CD8-positive, alpha-beta memory T cell (primary cell): ENCODE measurements at regions of chr5 and their contacts with region 1.

Region 1: GRCh38 chr5:134041570-134042411 is 37.0 kb upstream of the VDAC1 start:
- DNase-seq: peak in 1 of 5 donors; percentile 13
- H3K4me3 ChIP-seq: no peak overlapping the region
- H3K4me3 Mint-ChIP-seq: peak overlapping the region in 4 of 7 donors; percentile 41 to 64 (median 49)
- H3K27ac ChIP-seq: no peak overlapping the region
- H3K27ac Mint-ChIP-seq: peak overlapping the region in 7 of 8 donors; percentile 17 to 89 (median 72)
- H3K4me1 ChIP-seq: peaks cover 36% of the 10 kb centered on the region
- H3K4me1 Mint-ChIP-seq: peaks cover 19 to 56% (median 37%) of the 10 kb centered on the region in 3 donors
- H3K27me3 ChIP-seq: no peaks in the 10 kb centered on the region
- H3K27me3 Mint-ChIP-seq: no peaks in the 10 kb centered on the region

Region 2: DNA sequence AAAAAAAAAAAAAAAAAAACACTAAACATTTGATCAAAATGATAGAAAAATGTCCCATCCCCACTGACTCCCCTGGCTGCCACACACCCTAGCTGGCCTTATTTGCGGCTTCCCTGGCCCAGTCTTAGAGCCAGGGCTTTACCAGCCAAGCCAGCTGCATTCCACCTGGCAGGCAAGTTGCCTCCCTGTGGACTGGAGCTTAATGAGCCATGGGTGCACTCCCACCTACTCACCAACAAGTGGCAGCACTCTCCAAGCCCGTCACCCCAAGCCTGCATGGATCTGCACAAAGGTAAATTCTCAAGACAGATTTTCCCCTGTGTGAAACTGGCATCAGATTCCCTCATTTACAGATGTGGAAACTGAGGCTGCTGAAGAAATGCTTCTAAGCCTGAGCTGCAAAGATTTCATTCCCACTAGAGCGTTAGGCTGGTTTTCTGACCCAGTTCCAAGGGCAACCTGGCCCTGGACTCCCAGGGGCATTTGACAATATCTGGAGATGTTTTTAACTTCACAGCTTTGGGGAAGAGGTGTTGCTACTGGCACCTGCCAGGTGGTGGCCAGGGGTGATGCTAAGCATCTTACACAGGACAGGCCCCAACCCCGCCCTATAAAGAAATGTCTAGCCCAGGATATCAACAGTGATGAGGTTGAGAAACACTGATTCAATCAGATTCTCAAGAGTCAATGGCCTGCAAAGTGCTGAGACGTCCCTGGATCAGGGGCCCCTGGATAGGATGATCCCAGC is 15.1 kb before region 1 on chr5:
- CTCF ChIA-PET with region 1: interaction called, 14 read pairs
- POLR2A ChIA-PET with region 1: no interaction called
- DNase-seq: peak; percentile 7 to 71 (median 21)
- H3K4me3 ChIP-seq: no peak overlapping the region
- H3K4me3 Mint-ChIP-seq: no peak overlapping the region
- H3K27ac ChIP-seq: no peak overlapping the region
- H3K27ac Mint-ChIP-seq: peak overlapping the region in 2 of 8 donors; percentile 47 to 65
- H3K4me1 ChIP-seq: no peaks in the 10 kb centered on the region
- H3K4me1 Mint-ChIP-seq: no peaks in the 10 kb centered on the region
- H3K27me3 ChIP-seq: no peaks in the 10 kb centered on the region
- H3K27me3 Mint-ChIP-seq: peaks cover 6 to 12% of the 10 kb centered on the region in 2 donors

Region 3: GRCh38 chr5:134083517-134083916 is 41.7 kb after region 1 on chr5:
- CTCF ChIA-PET with region 1: interaction called, 21 read pairs
- POLR2A ChIA-PET with region 1: no interaction called
- DNase-seq: no peak
- H3K4me3 ChIP-seq: no peak overlapping the region
- H3K4me3 Mint-ChIP-seq: peak overlapping the region in 1 of 7 donors; percentile 16
- H3K27ac ChIP-seq: no peak overlapping the region
- H3K27ac Mint-ChIP-seq: peak overlapping the region in 3 of 8 donors; percentile 36 to 79 (median 50)
- H3K4me1 ChIP-seq: peaks cover 79% of the 10 kb centered on the region
- H3K4me1 Mint-ChIP-seq: peaks cover 57 to 78% (median 73%) of the 10 kb centered on the region in 3 donors
- H3K27me3 ChIP-seq: no peaks in the 10 kb centered on the region
- H3K27me3 Mint-ChIP-seq: peaks cover 0 to 3% of the 10 kb centered on the region in 2 donors

Region 4: DNA sequence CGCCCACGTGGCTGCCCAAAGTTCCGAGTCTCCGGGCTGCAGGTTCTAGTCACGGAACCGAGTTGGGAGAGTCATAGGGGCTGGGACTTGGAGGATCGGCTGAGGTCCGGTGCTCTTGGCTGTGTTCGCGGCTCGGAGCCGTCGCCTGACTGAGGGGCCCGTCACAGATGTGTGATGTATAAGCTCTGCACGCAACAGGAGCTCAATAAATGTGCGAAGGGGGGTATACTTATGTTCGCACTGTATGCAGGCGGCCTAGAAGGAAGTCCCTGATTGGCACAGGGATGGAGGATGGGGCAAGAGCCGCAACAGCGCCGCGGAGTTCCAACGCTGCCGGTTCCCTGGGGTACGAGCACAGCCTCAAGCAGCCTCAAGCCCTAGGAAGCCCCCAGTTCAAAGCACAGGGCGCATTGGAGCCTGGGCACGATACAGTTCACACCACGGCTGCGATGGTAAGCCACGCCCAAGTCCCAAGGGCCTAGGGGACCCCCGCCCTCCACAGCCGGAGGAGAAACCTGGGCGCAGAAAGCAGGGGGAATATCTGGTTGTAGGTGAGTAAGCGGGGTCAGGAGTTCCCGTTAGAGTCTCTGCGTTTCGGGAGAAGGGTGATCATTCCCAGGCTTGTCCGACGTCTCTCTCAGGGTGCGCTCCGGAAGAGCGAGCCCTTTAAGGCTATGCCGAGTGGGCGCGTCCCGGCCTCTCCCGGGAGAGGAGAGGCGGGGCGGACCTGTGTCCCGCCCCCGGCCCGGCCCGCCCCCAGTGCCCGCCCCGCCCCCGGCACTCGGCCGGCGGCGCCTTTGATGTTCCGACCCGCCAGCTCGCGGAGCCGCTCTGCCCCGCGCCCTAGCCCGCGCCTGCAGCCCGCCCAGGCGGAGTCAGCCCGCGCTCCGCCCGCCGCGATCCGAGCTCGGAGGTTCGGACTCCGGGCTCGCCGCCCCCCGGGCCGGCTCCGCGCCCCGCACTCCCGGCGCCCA is 72.4 kb after region 1 on chr5 and contains the start of gene TCF7:
- CTCF ChIA-PET with region 1: interaction called, 131 read pairs
- POLR2A ChIA-PET with region 1: interaction called, 7 read pairs
- DNase-seq: peak; percentile 74 to 87 (median 80)
- H3K4me3 ChIP-seq: peak within 1 kb of the TSS; percentile 95
- H3K4me3 Mint-ChIP-seq: peak within 1 kb of the TSS; percentile 94 to 99 (median 98)
- H3K27ac ChIP-seq: peak within 1 kb of the TSS; percentile 62
- H3K27ac Mint-ChIP-seq: peak within 1 kb of the TSS; percentile 89 to 99 (median 96)
- H3K4me1 ChIP-seq: peaks cover 55% of the 10 kb centered on the region
- H3K4me1 Mint-ChIP-seq: peaks cover 54 to 71% (median 59%) of the 10 kb centered on the region in 3 donors
- H3K27me3 ChIP-seq: no peaks in the 10 kb centered on the region
- H3K27me3 Mint-ChIP-seq: no peaks in the 10 kb centered on the region
- total RNA-seq, gene TCF7: 85.2 to 89.7 TPM

Region 5: GRCh38 chr5:134140530-134141201 is 98.9 kb after region 1 on chr5:
- CTCF ChIA-PET with region 1: interaction called, 429 read pairs
- POLR2A ChIA-PET with region 1: interaction called, 16 read pairs
- DNase-seq: peak in 4 of 5 donors; percentile 47 to 73 (median 58)
- H3K4me3 ChIP-seq: no peak overlapping the region
- H3K4me3 Mint-ChIP-seq: peak overlapping the region in 2 of 7 donors; percentile 24 to 59
- H3K27ac ChIP-seq: peak overlapping the region; percentile 35
- H3K27ac Mint-ChIP-seq: peak overlapping the region; percentile 86 to 100 (median 94)
- H3K4me1 ChIP-seq: peaks cover 57% of the 10 kb centered on the region
- H3K4me1 Mint-ChIP-seq: peaks cover 65 to 97% (median 86%) of the 10 kb centered on the region in 3 donors
- H3K27me3 ChIP-seq: no peaks in the 10 kb centered on the region
- H3K27me3 Mint-ChIP-seq: no peaks in the 10 kb centered on the region

Region 6: DNA sequence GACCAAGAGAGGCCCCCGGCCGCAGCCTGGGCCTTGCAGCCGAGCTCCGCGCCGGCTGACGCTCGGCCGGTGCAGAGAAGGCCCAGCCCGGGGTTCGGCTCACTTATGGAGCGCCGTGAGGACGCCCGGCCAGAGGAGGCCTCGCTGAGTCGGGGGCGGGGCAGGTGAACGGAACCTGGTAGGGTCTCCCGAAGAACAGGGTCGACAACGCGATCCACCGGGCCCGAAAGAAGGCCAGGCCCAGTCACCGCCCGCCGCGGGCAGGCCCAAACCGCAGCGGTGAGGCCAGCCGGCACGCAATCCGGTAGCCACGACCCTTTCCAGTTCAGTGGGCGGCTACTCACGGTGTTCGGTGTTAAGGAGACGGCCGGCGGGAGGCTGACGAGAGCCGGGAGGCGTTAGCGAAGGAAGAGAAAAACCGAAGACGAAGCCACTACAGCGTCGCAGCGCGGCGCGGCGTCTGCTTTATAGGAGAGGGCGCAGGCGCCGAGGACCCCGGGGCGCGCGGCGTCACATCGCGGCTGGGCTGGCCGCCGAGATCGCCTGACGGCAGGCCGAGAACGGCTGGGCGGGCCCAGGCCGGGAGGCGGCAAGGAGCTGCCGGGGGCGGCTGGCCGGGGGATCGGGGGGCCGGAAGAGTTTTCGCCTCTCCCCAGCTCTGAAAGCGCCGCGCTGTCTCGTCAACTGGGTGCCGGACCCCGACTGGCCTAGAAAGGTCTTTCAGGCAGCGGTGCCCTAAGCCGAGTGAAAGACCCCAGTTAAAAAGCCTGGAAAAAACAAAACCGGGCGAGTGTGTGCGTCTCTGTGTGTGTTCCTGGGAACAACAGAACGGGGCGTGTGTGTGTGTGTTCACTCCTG is 134.9 kb after region 1 on chr5 and contains the start of gene SKP1:
- CTCF ChIA-PET with region 1: interaction called, 11 read pairs
- POLR2A ChIA-PET with region 1: interaction called, 4 read pairs
- DNase-seq: peak; percentile 75 to 91 (median 88)
- H3K4me3 ChIP-seq: peak within 1 kb of the TSS; percentile 86
- H3K4me3 Mint-ChIP-seq: peak within 1 kb of the TSS; percentile 97 to 100 (median 98)
- H3K27ac ChIP-seq: peak within 1 kb of the TSS; percentile 97
- H3K27ac Mint-ChIP-seq: peak within 1 kb of the TSS; percentile 97 to 99 (median 98)
- H3K4me1 ChIP-seq: peaks cover 22% of the 10 kb centered on the region
- H3K4me1 Mint-ChIP-seq: peaks cover 28 to 41% (median 38%) of the 10 kb centered on the region in 3 donors
- H3K27me3 ChIP-seq: no peaks in the 10 kb centered on the region
- H3K27me3 Mint-ChIP-seq: peaks cover 0 to 1% of the 10 kb centered on the region in 2 donors
- total RNA-seq, gene SKP1: 264 to 280 TPM

Region 7: GRCh38 chr5:134370871-134371833 is 329.4 kb after region 1 on chr5 and contains the start of gene UBE2B:
- CTCF ChIA-PET with region 1: no interaction called
- POLR2A ChIA-PET with region 1: no interaction called
- DNase-seq: peak; percentile 94 to 98 (median 97)
- H3K4me3 ChIP-seq: peak within 1 kb of the TSS; percentile 66
- H3K4me3 Mint-ChIP-seq: peak within 1 kb of the TSS; percentile 88 to 99 (median 98)
- H3K27ac ChIP-seq: peak within 1 kb of the TSS; percentile 100
- H3K27ac Mint-ChIP-seq: peak within 1 kb of the TSS; percentile 97 to 100 (median 100)
- H3K4me1 ChIP-seq: peaks cover 60% of the 10 kb centered on the region
- H3K4me1 Mint-ChIP-seq: peaks cover 46 to 70% (median 66%) of the 10 kb centered on the region in 3 donors
- H3K27me3 ChIP-seq: no peaks in the 10 kb centered on the region
- H3K27me3 Mint-ChIP-seq: peaks cover 0 to 10% of the 10 kb centered on the region in 2 donors
- total RNA-seq, gene UBE2B: 105 TPM